Calu3 (cell line): ENCODE measurements at regions of chr1 and their contacts with region 1.

Region 1: DNA sequence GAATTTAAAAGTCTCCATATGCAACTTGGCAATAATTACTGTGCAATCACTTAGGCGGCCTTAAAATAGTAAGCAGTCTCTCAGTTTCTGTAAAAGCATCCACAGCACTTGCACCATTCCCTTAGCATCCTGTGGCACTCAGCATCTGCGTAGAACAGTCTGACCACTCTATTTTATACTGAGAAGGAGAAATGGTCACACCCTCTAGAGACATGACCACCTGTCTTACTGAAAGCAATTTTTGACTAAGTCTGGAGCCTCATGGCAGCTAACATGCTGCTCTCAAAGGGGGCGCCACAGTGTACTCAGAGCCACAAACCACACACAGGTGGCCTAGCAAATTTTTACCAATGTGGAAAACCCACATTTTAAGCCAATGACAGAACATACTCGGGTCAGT is 62.0 kb downstream of the KCNK1 start:
- DNase-seq: no peak
- H3K4me3 Mint-ChIP-seq: no peak overlapping the region
- H3K27ac Mint-ChIP-seq: peak overlapping the region; percentile 73
- H3K4me1 Mint-ChIP-seq: peaks cover 51% of the 10 kb centered on the region
- H3K27me3 Mint-ChIP-seq: no peaks in the 10 kb centered on the region
- CTCF ChIP-seq: no peak

Region 2: DNA sequence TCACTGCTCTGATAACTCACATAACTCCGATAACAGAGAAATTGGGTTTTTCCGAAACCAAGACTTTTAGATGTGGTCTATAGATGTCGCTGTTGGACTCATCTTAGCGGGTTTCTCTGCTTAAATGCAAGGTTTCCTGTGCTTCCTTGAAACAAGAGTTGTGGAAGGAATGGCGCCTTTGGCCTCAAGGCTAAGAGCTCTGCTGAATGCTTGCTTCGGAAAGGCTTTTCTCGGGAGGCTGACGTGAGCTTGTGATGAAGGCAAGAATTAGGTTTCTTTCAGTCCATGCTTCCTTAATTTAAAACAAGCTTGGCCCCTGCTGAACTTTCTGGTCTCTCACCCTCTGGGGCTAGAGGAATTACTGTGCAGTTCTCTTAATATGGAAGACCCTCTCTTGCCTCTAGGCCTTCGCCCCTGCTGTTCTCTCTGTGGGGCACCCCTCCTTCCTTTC is 234.9 kb before region 1 on chr1:
- CTCF ChIA-PET with region 1: interaction called, 4 read pairs
- intact Hi-C with region 1: loop called (anchors 5 kb)
- DNase-seq: peak; percentile 40
- H3K4me3 Mint-ChIP-seq: no peak overlapping the region
- H3K27ac Mint-ChIP-seq: no peak overlapping the region
- H3K4me1 Mint-ChIP-seq: no peaks in the 10 kb centered on the region
- H3K27me3 Mint-ChIP-seq: no peaks in the 10 kb centered on the region
- CTCF ChIP-seq: peak; percentile 67

Region 3: DNA sequence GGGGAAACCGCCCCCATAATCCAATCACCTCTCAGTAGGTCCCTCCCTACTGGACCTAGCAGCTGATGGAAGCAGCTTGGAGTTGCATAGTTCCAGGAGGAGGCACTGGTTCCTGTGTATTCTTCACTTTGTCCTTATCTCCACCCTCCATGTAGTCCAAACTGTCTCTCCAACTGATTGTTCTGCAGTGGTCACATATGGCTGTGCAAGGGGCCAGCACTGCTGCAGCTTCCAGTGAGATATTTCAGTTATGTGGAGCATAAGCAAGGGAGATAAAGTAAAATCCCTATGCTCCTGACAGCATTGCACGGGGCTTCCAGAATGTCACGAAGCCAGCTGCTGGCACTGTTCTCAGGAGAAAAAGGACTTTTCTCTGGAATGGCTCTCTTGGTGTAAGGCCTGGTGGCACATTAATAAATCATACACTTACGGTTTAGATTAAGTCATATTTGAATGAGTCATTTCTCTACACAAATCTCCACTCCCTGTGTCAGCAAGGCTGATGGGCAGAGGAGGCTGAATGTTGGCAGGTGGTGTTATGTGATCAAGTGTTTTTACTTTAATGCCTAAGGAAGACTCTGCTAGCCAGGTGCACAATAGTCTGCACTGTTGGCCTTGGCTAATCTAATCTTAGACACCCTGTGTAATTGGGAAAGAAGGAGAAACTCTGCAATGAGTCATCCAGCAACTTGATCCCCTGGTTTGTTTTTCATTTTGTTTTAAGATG is 31.4 kb after region 1 on chr1:
- CTCF ChIA-PET with region 1: interaction called, 3 read pairs
- intact Hi-C with region 1: loop called (anchors 2 kb)
- DNase-seq: peak; percentile 80
- H3K4me3 Mint-ChIP-seq: peak overlapping the region; percentile 65
- H3K27ac Mint-ChIP-seq: peak overlapping the region; percentile 95
- H3K4me1 Mint-ChIP-seq: peaks cover 61% of the 10 kb centered on the region
- H3K27me3 Mint-ChIP-seq: no peaks in the 10 kb centered on the region
- CTCF ChIP-seq: no peak

Region 4: GRCh38 chr1:233879841-233880240 is 203.9 kb after region 1 on chr1:
- CTCF ChIA-PET with region 1: no interaction called
- intact Hi-C with region 1: no loop called
- DNase-seq: no peak
- H3K4me3 Mint-ChIP-seq: no peak overlapping the region
- H3K27ac Mint-ChIP-seq: no peak overlapping the region
- H3K4me1 Mint-ChIP-seq: no peaks in the 10 kb centered on the region
- H3K27me3 Mint-ChIP-seq: peaks cover 49% of the 10 kb centered on the region
- CTCF ChIP-seq: no peak

Region 5: DNA sequence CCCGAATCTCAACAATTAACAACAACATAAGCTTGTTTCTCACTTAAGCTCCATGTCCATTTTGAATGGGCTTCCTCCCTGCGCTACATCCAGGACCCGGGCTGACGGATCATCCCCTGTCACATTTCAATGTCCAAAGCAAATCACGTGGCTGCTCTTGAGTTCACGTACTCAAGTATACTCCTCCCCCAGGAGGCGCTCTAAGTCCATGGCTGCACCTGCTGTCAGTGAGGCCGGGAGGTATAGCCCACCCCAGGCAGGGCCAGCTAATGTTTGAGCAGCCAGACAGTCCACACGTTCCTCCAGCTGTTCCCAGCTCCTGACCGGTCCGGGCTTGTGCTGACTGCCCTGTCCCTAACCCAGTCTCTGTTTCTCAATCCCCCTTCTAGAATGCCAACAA is 449.4 kb after region 1 on chr1:
- CTCF ChIA-PET with region 1: no interaction called
- intact Hi-C with region 1: no loop called
- DNase-seq: peak; percentile 54
- H3K4me3 Mint-ChIP-seq: no peak overlapping the region
- H3K27ac Mint-ChIP-seq: no peak overlapping the region
- H3K4me1 Mint-ChIP-seq: no peaks in the 10 kb centered on the region
- H3K27me3 Mint-ChIP-seq: no peaks in the 10 kb centered on the region
- CTCF ChIP-seq: peak; percentile 14